ENCODE measurements at regions of chr2 and their contacts with region 1.

Region 1: GRCh38 chr2:116510158-116510557 is 1304.3 kb upstream of the DDX18 start:
- DNase-seq: no peak
- H3K4me3 ChIP-seq: no peak overlapping the region
- H3K27ac ChIP-seq: no peak overlapping the region
- H3K4me1 ChIP-seq: no peaks in the 10 kb centered on the region
- H3K27me3 ChIP-seq: no peaks in the 10 kb centered on the region
- CTCF ChIP-seq: peak in 2 of 3 experiments; percentile 47 to 73; a peak in 3 of 4 replicates
- EP300 ChIP-seq: no peak
- POLR2A ChIP-seq: no peak
- RAD21 ChIP-seq: peak; percentile 78 to 81

Region 2: GRCh38 chr2:116499389-116499788 is 10.8 kb before region 1 on chr2:
- CTCF ChIA-PET with region 1: interaction called, 10 read pairs
- POLR2A ChIA-PET with region 1: no interaction called
- DNase-seq: no peak
- H3K4me3 ChIP-seq: no peak overlapping the region; a peak in 1 of 8 replicates
- H3K27ac ChIP-seq: no peak overlapping the region
- H3K4me1 ChIP-seq: peaks cover 0 to 6% (median 2%) of the 10 kb centered on the region in 4 experiments; a peak in 2 of 7 replicates
- H3K27me3 ChIP-seq: no peaks in the 10 kb centered on the region
- CTCF ChIP-seq: no peak
- EP300 ChIP-seq: no peak
- POLR2A ChIP-seq: no peak
- RAD21 ChIP-seq: no peak

Region 3: GRCh38 chr2:116952254-116952653 is 442.1 kb after region 1 on chr2:
- CTCF ChIA-PET with region 1: interaction called, 10 read pairs
- POLR2A ChIA-PET with region 1: no interaction called
- DNase-seq: no peak
- H3K4me3 ChIP-seq: no peak overlapping the region
- H3K27ac ChIP-seq: no peak overlapping the region
- H3K4me1 ChIP-seq: no peaks in the 10 kb centered on the region
- H3K27me3 ChIP-seq: no peaks in the 10 kb centered on the region
- CTCF ChIP-seq: peak in 2 of 3 experiments; percentile 61 to 64; a peak in 3 of 4 replicates
- EP300 ChIP-seq: no peak
- POLR2A ChIP-seq: no peak
- RAD21 ChIP-seq: peak; percentile 68 to 69